ENCODE measurements at regions of chr3 and their contacts with region 1.

Region 1: DNA sequence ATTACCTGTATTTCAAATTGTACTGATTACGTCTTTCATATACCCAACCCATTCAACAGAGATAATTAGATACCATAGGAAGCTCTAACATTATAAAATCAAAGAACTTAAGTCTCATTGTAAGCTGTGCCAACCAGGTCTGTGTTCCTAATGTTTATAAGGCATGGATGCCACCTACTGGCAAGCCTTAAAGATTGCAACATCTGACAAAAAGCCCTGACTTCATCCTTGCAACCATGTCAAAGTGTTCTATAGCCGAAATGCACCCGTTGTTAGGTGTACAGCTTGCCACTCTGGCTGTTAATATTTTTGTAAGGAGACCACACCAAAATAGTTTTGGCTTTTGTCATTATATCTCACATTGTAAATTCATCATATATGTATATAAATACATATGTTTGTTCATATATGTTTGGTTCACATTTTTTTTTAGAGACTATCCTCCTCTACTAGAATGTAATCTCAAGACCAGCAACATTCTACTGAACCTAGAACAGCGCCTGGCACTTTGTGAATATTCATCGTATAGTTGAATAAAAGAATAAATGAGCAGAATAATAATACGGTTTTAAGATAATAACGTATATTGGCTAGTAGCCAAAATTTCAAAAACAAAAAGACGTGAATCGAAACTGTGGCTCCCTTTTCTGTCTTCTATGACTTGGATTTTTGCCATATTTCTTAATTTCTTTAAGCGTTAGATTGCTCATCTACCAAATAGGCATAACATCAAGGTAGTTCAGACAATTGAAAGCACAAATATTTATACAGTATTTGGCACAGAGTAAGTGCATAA is 258.1 kb downstream of the TBL1XR1 start:
- DNase-seq: no peak
- H3K4me3 ChIP-seq: no peak overlapping the region
- H3K27ac ChIP-seq: no peak overlapping the region
- H3K4me1 ChIP-seq: peaks cover 0 to 17% (median 8%) of the 10 kb centered on the region in 4 donors
- H3K27me3 ChIP-seq: no peaks in the 10 kb centered on the region
- CTCF ChIP-seq: peak; percentile 20 to 72 (median 62)
- EP300 ChIP-seq: no peak
- POLR2A ChIP-seq: no peak

Region 2: GRCh38 chr3:176872771-176873209 is 66.4 kb before region 1 on chr3:
- intact Hi-C with region 1: loop called (anchors 5 kb)
- DNase-seq: no peak
- H3K4me3 ChIP-seq: no peak overlapping the region
- H3K27ac ChIP-seq: no peak overlapping the region
- H3K4me1 ChIP-seq: peaks cover 0 to 4% (median under 1%) of the 10 kb centered on the region in 4 donors
- H3K27me3 ChIP-seq: no peaks in the 10 kb centered on the region
- CTCF ChIP-seq: peak in 3 of 4 experiments; percentile 48 to 66 (median 48)
- EP300 ChIP-seq: no peak
- POLR2A ChIP-seq: no peak

Region 3: GRCh38 chr3:177013681-177014280 is 74.6 kb after region 1 on chr3:
- intact Hi-C with region 1: no loop called
- DNase-seq: no peak
- H3K4me3 ChIP-seq: no peak overlapping the region
- H3K27ac ChIP-seq: no peak overlapping the region
- H3K4me1 ChIP-seq: peaks cover 0 to 5% (median 0%) of the 10 kb centered on the region in 4 donors
- H3K27me3 ChIP-seq: no peaks in the 10 kb centered on the region
- CTCF ChIP-seq: no peak
- EP300 ChIP-seq: no peak
- POLR2A ChIP-seq: no peak

Region 4: DNA sequence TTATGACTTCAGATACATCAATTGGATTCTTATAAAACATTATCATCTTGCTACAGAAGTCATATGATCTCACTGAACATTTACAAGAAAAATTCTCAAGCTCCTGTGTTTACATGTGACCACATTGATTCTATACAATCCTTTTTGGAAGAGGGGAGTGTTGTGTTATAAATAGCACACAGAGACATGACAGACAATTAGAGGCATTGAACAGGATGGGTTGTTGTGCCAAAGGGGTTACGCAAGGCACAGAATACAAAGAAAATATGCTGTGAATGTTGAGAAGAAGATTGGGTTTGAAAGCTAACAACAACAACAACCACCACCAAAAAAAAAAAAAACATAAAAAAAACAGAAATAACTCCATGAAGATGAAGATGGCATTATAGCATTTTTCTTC is 290.6 kb after region 1 on chr3:
- intact Hi-C with region 1: no loop called
- DNase-seq: no peak
- H3K4me3 ChIP-seq: no peak overlapping the region
- H3K27ac ChIP-seq: no peak overlapping the region
- H3K4me1 ChIP-seq: no peaks in the 10 kb centered on the region
- H3K27me3 ChIP-seq: no peaks in the 10 kb centered on the region
- CTCF ChIP-seq: no peak
- EP300 ChIP-seq: no peak
- POLR2A ChIP-seq: no peak